Posterior vena cava (tissue), 2 donors: ENCODE measurements at regions of chr18 and their contacts with region 1.

Region 1: GRCh38 chr18:32478317-32478716 is 7.6 kb upstream of the GAREM1 start:
- DNase-seq: no peak

Region 2: GRCh38 chr18:32271672-32272208 is 206.6 kb before region 1 on chr18:
- intact Hi-C with region 1: loop called (anchors 5 kb)
- DNase-seq: no peak

Region 3: DNA sequence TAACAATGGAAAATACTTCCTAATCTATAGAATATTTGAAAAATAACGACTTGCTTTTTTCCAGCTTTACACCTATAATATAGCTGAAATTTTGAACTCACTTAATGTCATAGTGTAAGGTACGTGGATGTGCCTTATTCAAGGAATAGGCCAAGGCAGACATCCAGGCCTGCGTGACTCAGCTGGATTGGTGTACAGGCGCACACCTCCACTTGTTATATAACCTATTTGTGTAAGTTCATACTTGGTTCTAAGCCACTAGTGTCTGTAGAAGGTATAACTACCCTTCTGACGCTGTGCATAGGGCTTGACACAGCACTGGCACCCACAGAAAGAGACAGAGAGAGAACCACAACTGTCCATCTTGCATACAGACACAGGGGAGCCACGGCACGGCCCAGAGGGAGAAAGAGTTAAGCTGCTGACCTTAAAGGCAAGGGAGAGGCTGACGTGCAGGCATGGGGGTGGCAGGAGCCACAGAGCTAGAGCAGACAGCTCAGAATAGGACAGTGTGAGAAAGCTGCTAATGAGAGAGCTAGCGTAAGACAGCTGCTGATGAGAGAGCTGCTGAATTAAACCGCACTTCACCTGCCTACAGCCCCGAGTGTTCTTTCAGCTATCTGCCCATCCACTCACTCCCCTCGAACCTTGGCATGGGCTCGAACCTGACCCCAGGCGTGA is 946.1 kb after region 1 on chr18:
- intact Hi-C with region 1: no loop called
- DNase-seq: peak; percentile 43